Endothelial cell of umbilical vein (primary cell): ENCODE measurements at regions of chr7 and their contacts with region 1.

Region 1: GRCh38 chr7:98280791-98281756 is at the start of gene BRI3:
- DNase-seq: peak; percentile 79
- H3K4me3 ChIP-seq: peak within 1 kb of the TSS; percentile 20 to 95 (median 83)
- H3K27ac ChIP-seq: peak within 1 kb of the TSS; percentile 72
- H3K4me1 ChIP-seq: peaks cover 31% of the 10 kb centered on the region
- H3K27me3 ChIP-seq: no peaks in the 10 kb centered on the region
- CTCF ChIP-seq: peak in 1 of 2 donors; percentile 8
- POLR2A ChIP-seq: peak; percentile 74
- total RNA-seq, gene BRI3: 284 and 317 TPM in 2 replicates

Region 2: GRCh38 chr7:98240961-98241674 is 40.0 kb before region 1 on chr7:
- CTCF ChIA-PET with region 1: interaction called, 6 read pairs
- POLR2A ChIA-PET with region 1: no interaction called
- dilution Hi-C with region 1: no loop called
- intact Hi-C with region 1: loop called (anchors 1 kb)
- DNase-seq: peak; percentile 54
- H3K4me3 ChIP-seq: no peak overlapping the region
- H3K27ac ChIP-seq: no peak overlapping the region
- H3K4me1 ChIP-seq: peaks cover 12% of the 10 kb centered on the region
- H3K27me3 ChIP-seq: no peaks in the 10 kb centered on the region
- CTCF ChIP-seq: peak; percentile 86 to 93
- POLR2A ChIP-seq: no peak

Region 3: DNA sequence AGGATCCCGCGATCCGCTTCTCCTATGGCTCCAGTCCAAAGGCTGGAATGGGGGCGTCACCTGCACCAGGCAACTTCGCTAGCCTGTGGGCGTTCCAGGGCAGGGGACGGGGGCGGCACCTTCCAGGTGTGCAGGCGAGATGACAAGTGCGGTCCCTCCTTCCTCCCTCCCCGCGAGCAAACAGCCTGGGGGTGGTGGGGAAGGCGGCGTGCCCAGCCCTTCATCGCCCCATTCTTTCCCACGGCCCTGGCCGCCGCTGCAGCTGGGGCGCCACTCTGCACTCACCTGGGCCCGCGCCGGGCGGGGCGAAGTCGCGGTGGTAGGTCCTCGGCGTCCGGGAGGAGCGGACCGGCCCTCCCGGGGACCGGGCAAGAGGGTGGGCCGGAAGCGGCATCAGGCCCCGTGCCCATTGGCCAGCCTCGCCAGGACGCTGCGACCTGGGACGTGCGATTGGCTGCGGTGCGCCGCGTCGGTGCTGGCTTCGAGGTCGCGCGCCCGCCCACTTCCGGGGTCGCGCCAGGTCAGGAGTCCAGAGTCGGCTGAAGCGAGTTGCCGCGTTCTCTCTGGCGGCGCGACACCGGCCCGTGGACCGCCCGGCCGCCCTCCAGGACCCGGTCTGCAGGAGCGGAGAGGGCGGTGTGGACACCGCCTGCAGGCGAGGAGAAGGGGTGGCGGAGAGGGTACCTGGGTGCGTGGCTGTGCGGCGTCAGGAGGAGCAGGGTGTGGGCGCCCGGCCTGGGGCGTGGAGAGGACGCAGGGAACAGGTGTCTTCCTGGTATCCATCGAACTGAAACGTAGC is 29.0 kb before region 1 on chr7 and contains the start of gene TECPR1:
- CTCF ChIA-PET with region 1: interaction called, 4 read pairs
- POLR2A ChIA-PET with region 1: no interaction called
- dilution Hi-C with region 1: no loop called
- intact Hi-C with region 1: loop called (anchors 1 kb)
- DNase-seq: peak; percentile 89
- H3K4me3 ChIP-seq: peak within 1 kb of the TSS; percentile 53 to 96 (median 65)
- H3K27ac ChIP-seq: peak within 1 kb of the TSS; percentile 58
- H3K4me1 ChIP-seq: peaks cover 43% of the 10 kb centered on the region
- H3K27me3 ChIP-seq: no peaks in the 10 kb centered on the region
- CTCF ChIP-seq: no peak
- POLR2A ChIP-seq: peak; percentile 35
- total RNA-seq, gene TECPR1: 84.9 and 97.5 TPM in 2 replicates

Region 4: DNA sequence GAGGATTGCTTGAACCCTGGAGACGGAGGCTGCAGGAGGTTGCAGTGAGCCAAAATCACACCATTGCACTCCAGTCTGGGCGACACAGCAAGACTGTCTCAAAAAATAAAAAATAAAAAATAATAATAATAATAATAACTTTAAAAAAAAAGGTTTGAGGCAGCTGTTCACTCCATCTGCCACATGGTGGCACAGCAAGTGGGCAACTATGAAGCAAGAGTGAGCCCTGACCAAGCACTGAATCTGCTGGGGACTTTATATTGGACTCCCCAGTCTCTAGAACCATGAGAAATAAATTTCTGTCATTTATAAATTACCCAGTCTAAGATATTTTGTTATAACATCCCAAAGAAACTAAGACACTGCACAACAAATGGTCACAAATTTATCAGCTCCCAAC is 14.2 kb before region 1 on chr7:
- CTCF ChIA-PET with region 1: interaction called, 21 read pairs
- POLR2A ChIA-PET with region 1: no interaction called
- dilution Hi-C with region 1: no loop called
- intact Hi-C with region 1: loop called (anchors 2 kb)
- DNase-seq: no peak
- H3K4me3 ChIP-seq: no peak overlapping the region
- H3K27ac ChIP-seq: no peak overlapping the region
- H3K4me1 ChIP-seq: peaks cover 8% of the 10 kb centered on the region
- H3K27me3 ChIP-seq: no peaks in the 10 kb centered on the region
- CTCF ChIP-seq: peak in 1 of 2 donors; percentile 43
- POLR2A ChIP-seq: no peak

Region 5: GRCh38 chr7:98354511-98355257 is 73.6 kb after region 1 on chr7:
- CTCF ChIA-PET with region 1: no interaction called
- POLR2A ChIA-PET with region 1: no interaction called
- dilution Hi-C with region 1: no loop called
- intact Hi-C with region 1: loop called (anchors 2 kb)
- DNase-seq: peak; percentile 68
- H3K4me3 ChIP-seq: no peak overlapping the region
- H3K27ac ChIP-seq: peak overlapping the region; percentile 14
- H3K4me1 ChIP-seq: peaks cover 19% of the 10 kb centered on the region
- H3K27me3 ChIP-seq: no peaks in the 10 kb centered on the region
- CTCF ChIP-seq: no peak
- POLR2A ChIP-seq: no peak

Region 6: GRCh38 chr7:98365863-98366561 is 84.9 kb after region 1 on chr7:
- CTCF ChIA-PET with region 1: no interaction called
- POLR2A ChIA-PET with region 1: no interaction called
- dilution Hi-C with region 1: no loop called
- intact Hi-C with region 1: loop called (anchors 5 kb)
- DNase-seq: peak; percentile 30
- H3K4me3 ChIP-seq: no peak overlapping the region
- H3K27ac ChIP-seq: no peak overlapping the region
- H3K4me1 ChIP-seq: peaks cover 15% of the 10 kb centered on the region
- H3K27me3 ChIP-seq: no peaks in the 10 kb centered on the region
- CTCF ChIP-seq: no peak
- POLR2A ChIP-seq: no peak